ENCODE measurements at regions of chr12 and their contacts with region 1.

Region 1: DNA sequence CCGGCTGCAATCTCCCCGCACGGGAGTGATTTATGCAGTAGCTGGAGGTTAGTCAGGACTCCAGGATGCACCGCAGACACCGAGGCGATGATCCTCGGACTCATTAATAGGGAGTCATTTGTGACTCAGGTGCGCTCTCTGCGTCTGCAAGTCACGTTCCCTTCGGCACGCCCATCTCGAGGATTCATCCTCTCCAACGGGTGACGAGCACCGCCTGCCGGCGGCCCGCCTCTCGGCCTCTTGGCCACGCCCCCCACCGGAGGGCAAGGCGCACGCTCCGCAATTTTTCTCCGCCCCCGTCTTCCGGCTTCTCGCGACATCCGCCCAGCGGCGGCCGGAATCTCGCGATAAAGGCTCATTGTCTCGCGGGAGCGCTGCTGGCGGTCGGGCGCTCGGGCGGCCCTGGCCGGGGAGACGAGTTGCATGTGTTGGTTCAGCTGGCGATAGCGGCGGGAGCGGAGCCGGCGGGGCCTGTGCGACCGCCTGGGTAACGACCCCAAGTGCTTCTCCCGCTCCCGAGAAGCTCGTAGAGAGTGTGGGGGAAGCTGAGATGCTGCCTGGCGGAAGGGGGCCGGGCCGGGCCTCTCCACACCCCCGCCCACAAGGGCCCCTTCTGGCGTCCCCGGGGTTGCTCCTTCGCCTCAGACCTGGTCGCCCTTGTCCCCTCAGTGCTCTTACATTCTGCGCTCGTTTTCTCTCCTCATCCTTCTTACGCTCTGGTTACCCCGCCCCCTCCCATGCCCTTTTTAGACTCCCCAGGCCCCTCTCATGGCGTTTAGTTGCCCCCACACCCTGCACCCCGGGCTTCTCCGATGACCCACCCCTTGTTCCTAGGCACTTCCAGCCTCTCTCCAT is at the start of gene DENR:
- DNase-seq: peak; percentile 98
- H3K4me3 Mint-ChIP-seq: peak within 1 kb of the TSS; percentile 91
- H3K27ac Mint-ChIP-seq: peak within 1 kb of the TSS; percentile 96
- H3K4me1 Mint-ChIP-seq: peaks cover 34% of the 10 kb centered on the region
- H3K27me3 Mint-ChIP-seq: no peaks in the 10 kb centered on the region
- CTCF ChIP-seq: peak; percentile 86
- total RNA-seq, gene DENR: 87.9 and 104 TPM in 2 replicates

Region 2: DNA sequence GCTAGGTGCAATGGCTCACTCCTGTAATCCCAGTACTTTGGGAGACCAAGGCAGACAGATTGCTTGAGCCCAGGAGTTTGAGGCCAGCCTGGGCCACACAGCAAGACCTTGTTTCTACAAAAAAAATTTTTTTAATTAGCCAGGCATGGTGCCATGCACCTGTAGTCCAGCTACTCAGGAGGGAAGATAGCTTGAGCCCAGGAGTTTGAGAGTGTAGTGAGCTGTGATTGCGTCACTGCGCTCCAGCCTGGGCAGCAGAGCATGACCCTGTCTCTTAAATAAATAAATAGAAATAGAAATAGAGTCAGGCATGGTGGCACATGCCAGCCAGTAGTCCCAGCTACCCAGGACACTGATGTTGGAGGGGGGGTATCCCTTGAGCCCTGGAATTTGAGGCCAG is 293.5 kb before region 1 on chr12:
- CTCF ChIA-PET with region 1: no interaction called
- POLR2A ChIA-PET with region 1: no interaction called
- intact Hi-C with region 1: no loop called
- DNase-seq: no peak
- H3K4me3 Mint-ChIP-seq: no peak overlapping the region
- H3K27ac Mint-ChIP-seq: no peak overlapping the region
- H3K4me1 Mint-ChIP-seq: peaks cover 5% of the 10 kb centered on the region
- H3K27me3 Mint-ChIP-seq: no peaks in the 10 kb centered on the region
- CTCF ChIP-seq: no peak

Region 3: GRCh38 chr12:122635471-122635870 is 117.2 kb before region 1 on chr12:
- CTCF ChIA-PET with region 1: interaction called, 73 read pairs
- POLR2A ChIA-PET with region 1: interaction called, 41 read pairs
- intact Hi-C with region 1: loop called (anchors 1 kb)
- DNase-seq: no peak
- H3K4me3 Mint-ChIP-seq: no peak overlapping the region
- H3K27ac Mint-ChIP-seq: no peak overlapping the region
- H3K4me1 Mint-ChIP-seq: no peaks in the 10 kb centered on the region
- H3K27me3 Mint-ChIP-seq: no peaks in the 10 kb centered on the region
- CTCF ChIP-seq: no peak

Region 4: GRCh38 chr12:122681814-122682213 is 70.9 kb before region 1 on chr12:
- CTCF ChIA-PET with region 1: interaction called, 5 read pairs
- POLR2A ChIA-PET with region 1: interaction called, 3 read pairs
- intact Hi-C with region 1: loop called (anchors 2 kb)
- DNase-seq: peak; percentile 72
- H3K4me3 Mint-ChIP-seq: no peak overlapping the region
- H3K27ac Mint-ChIP-seq: no peak overlapping the region
- H3K4me1 Mint-ChIP-seq: peaks cover 7% of the 10 kb centered on the region
- H3K27me3 Mint-ChIP-seq: no peaks in the 10 kb centered on the region
- CTCF ChIP-seq: no peak

Region 5: GRCh38 chr12:122825773-122826724 is 73.4 kb after region 1 on chr12:
- CTCF ChIA-PET with region 1: no interaction called
- POLR2A ChIA-PET with region 1: interaction called, 12 read pairs
- intact Hi-C with region 1: no loop called
- DNase-seq: no peak
- H3K4me3 Mint-ChIP-seq: peak overlapping the region; percentile 67
- H3K27ac Mint-ChIP-seq: no peak overlapping the region
- H3K4me1 Mint-ChIP-seq: peaks cover 12% of the 10 kb centered on the region
- H3K27me3 Mint-ChIP-seq: no peaks in the 10 kb centered on the region
- CTCF ChIP-seq: no peak

Measured in MCF 10A (cell line).